Naive thymus-derived CD4-positive, alpha-beta T cell (primary cell): ENCODE measurements at regions of chr7 and their contacts with region 1.

Region 1: DNA sequence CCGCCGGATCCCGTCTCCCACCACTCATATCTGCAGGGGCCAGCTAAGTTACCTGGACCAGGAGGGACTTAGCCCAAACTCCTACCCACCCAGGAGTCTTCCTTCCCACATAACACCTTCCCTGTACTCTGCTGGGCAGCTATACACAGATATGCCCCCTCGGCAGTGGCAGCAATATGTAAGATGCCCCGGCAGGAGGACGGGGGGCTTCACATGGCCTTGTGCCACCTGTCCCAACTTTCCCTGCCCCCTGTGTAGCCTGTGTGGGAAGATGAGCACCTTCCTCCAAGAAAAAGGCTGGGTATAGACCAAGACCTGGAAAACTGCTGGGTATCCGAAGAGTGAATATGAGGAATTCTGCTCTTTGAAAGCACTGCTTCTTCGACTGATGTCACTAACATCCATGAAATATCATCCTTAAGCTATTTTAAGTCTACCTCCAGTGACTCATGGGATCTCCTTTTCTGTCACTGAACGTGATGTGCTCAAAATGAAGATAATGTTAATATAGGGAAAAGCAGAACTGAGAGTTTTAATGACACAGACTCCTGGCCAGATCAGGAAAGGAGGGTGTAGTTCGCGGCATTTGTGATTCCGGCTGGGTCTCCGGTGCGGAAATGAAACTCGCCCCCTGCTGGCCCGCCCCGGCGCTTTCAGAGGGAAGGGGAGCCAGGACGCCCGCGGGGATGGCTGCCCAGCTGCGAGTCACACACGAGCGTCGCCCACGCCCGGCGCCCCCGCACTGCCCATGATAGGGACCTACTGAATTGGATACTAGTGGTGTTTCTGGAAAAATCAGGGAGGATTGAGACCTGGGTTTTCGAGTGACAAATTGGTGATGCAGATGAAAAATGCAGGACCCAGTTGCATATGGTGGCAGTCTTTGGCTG is 256.9 kb upstream of the NFE2L3 start:
- DNase-seq: peak; percentile 37 to 66 (median 52)
- ATAC-seq: peak; percentile 84
- H3K4me3 ChIP-seq: peak overlapping the region; percentile 46
- H3K4me3 Mint-ChIP-seq: peak overlapping the region; percentile 48 to 93 (median 77)
- H3K27ac ChIP-seq: no peak overlapping the region
- H3K27ac Mint-ChIP-seq: peak overlapping the region in 4 of 9 donors; percentile 9 to 71 (median 38)
- H3K4me1 ChIP-seq: peaks cover 9 to 13% of the 10 kb centered on the region in 2 donors
- H3K4me1 Mint-ChIP-seq: peaks cover 13 to 29% (median 27%) of the 10 kb centered on the region in 7 donors
- H3K27me3 ChIP-seq: no peaks in the 10 kb centered on the region
- H3K27me3 Mint-ChIP-seq: peaks cover 7 to 37% (median 15%) of the 10 kb centered on the region in 5 donors

Region 2: GRCh38 chr7:25862260-25863037 is 32.7 kb before region 1 on chr7:
- CTCF ChIA-PET with region 1: interaction called, 4 read pairs
- POLR2A ChIA-PET with region 1: no interaction called
- intact Hi-C with region 1: loop called in 1 of 2 experiments (anchors 2 kb)
- DNase-seq: peak; percentile 32 to 95 (median 49)
- ATAC-seq: peak; percentile 93
- H3K4me3 ChIP-seq: peak overlapping the region; percentile 4
- H3K4me3 Mint-ChIP-seq: peak overlapping the region in 8 of 10 donors; percentile 38 to 87 (median 61)
- H3K27ac ChIP-seq: no peak overlapping the region
- H3K27ac Mint-ChIP-seq: peak overlapping the region in 8 of 9 donors; percentile 14 to 88 (median 84)
- H3K4me1 ChIP-seq: peaks cover 0 to 6% of the 10 kb centered on the region in 2 donors
- H3K4me1 Mint-ChIP-seq: peaks cover 8 to 46% (median 20%) of the 10 kb centered on the region in 7 donors
- H3K27me3 ChIP-seq: peaks cover 35 to 87% of the 10 kb centered on the region in 2 donors
- H3K27me3 Mint-ChIP-seq: peaks cover 23 to 82% (median 62%) of the 10 kb centered on the region in 5 donors

Region 3: DNA sequence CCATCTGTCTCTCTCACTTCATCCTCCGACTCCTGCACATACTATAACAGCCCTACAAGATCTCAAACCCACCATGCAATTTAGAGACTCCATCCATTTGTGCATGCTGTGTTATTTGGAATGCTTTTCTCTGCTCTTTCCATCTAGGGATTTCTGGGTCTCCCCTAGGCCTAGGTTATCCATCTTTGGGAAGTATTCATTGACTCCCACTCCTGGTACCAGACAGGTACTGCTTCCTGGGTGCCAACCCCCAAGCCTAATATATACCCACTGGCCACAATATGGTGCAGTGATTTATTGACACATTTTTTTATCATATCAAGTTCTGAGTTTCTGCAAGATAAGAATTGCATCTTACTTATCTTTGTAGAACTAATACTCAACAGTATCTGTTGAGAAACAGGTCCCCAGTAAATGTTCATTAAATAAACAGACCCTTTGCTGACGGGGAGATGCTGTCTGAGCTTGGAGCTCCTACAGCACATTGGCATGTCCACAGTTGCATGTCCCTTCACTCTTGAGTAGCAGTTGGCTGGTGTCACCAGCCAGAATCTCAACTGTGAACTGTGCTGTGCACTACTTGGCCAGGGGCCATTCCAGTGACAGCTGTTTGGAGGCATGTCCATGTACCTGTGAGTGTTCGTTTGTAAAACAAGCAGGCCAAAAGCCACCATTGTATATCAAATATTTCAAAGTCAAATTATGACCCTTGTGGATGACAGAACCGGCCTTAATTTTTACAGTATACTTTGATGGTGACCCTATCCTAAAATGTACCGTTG is 33.6 kb after region 1 on chr7:
- CTCF ChIA-PET with region 1: no interaction called
- POLR2A ChIA-PET with region 1: no interaction called
- intact Hi-C with region 1: no loop called
- DNase-seq: no peak
- ATAC-seq: no peak
- H3K4me3 ChIP-seq: no peak overlapping the region
- H3K4me3 Mint-ChIP-seq: no peak overlapping the region
- H3K27ac ChIP-seq: no peak overlapping the region
- H3K27ac Mint-ChIP-seq: no peak overlapping the region
- H3K4me1 ChIP-seq: no peaks in the 10 kb centered on the region
- H3K4me1 Mint-ChIP-seq: no peaks in the 10 kb centered on the region
- H3K27me3 ChIP-seq: peaks cover 0 to 3% of the 10 kb centered on the region in 2 donors
- H3K27me3 Mint-ChIP-seq: peaks cover 22 to 46% (median 37%) of the 10 kb centered on the region in 5 donors

Region 4: GRCh38 chr7:26061688-26062150 is 166.6 kb after region 1 on chr7:
- CTCF ChIA-PET with region 1: interaction called, 31 read pairs
- POLR2A ChIA-PET with region 1: interaction called, 3 read pairs
- intact Hi-C with region 1: loop called (anchors 1 kb)
- DNase-seq: peak; percentile 37 to 71 (median 59)
- ATAC-seq: peak; percentile 88
- H3K4me3 ChIP-seq: no peak overlapping the region
- H3K4me3 Mint-ChIP-seq: no peak overlapping the region
- H3K27ac ChIP-seq: no peak overlapping the region
- H3K27ac Mint-ChIP-seq: no peak overlapping the region
- H3K4me1 ChIP-seq: no peaks in the 10 kb centered on the region
- H3K4me1 Mint-ChIP-seq: peaks cover 0 to 13% (median 0%) of the 10 kb centered on the region in 7 donors
- H3K27me3 ChIP-seq: no peaks in the 10 kb centered on the region
- H3K27me3 Mint-ChIP-seq: peaks cover 5 to 33% (median 15%) of the 10 kb centered on the region in 5 donors

Region 5: DNA sequence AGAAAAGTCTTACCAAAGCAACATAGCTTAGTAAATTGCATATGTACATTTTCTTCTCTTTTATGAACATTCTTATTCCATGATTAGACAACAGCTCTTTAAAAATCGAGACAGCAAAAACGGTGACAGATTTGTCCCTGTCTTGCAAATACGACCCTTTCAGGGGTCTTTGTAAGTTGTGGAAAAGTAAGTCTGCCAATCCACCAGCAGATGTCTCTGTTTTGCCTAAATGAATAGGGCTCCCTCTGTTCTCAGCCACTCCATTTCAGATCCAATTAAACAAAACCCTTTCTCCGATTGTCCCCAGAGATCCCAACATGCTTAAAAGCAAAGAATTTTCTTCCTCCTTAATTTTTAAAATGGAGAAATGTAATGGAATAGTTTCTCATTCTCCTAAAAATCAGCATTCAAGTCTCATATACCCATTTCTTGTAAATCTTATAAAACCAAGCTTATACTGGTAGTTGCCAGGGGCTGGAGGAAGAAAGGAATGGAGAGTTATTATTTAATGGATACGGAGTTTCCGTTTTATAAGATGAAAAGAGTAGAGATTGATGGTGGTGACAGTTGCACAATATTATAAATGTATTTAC is 195.9 kb after region 1 on chr7:
- CTCF ChIA-PET with region 1: interaction called, 36 read pairs
- POLR2A ChIA-PET with region 1: no interaction called
- intact Hi-C with region 1: no loop called
- DNase-seq: peak in 7 of 9 donors; percentile 19 to 63 (median 53)
- ATAC-seq: peak; percentile 64
- H3K4me3 ChIP-seq: no peak overlapping the region
- H3K4me3 Mint-ChIP-seq: peak overlapping the region in 9 of 10 donors; percentile 4 to 50 (median 30)
- H3K27ac ChIP-seq: no peak overlapping the region
- H3K27ac Mint-ChIP-seq: peak overlapping the region in 6 of 9 donors; percentile 1 to 68 (median 2)
- H3K4me1 ChIP-seq: peaks cover 0 to 20% of the 10 kb centered on the region in 2 donors
- H3K4me1 Mint-ChIP-seq: peaks cover 11 to 54% (median 22%) of the 10 kb centered on the region in 7 donors
- H3K27me3 ChIP-seq: no peaks in the 10 kb centered on the region
- H3K27me3 Mint-ChIP-seq: no peaks in the 10 kb centered on the region

Region 6: GRCh38 chr7:26284995-26285632 is 390.0 kb after region 1 on chr7:
- CTCF ChIA-PET with region 1: interaction called, 4 read pairs
- POLR2A ChIA-PET with region 1: no interaction called
- intact Hi-C with region 1: loop called (anchors 1 to 2 kb)
- DNase-seq: peak in 6 of 9 donors; percentile 20 to 49 (median 30)
- ATAC-seq: peak; percentile 82
- H3K4me3 ChIP-seq: no peak overlapping the region
- H3K4me3 Mint-ChIP-seq: no peak overlapping the region
- H3K27ac ChIP-seq: no peak overlapping the region
- H3K27ac Mint-ChIP-seq: no peak overlapping the region
- H3K4me1 ChIP-seq: no peaks in the 10 kb centered on the region
- H3K4me1 Mint-ChIP-seq: peaks cover 0 to 6% (median 4%) of the 10 kb centered on the region in 7 donors
- H3K27me3 ChIP-seq: no peaks in the 10 kb centered on the region
- H3K27me3 Mint-ChIP-seq: peaks cover 0 to 19% (median 0%) of the 10 kb centered on the region in 5 donors

Region 7: DNA sequence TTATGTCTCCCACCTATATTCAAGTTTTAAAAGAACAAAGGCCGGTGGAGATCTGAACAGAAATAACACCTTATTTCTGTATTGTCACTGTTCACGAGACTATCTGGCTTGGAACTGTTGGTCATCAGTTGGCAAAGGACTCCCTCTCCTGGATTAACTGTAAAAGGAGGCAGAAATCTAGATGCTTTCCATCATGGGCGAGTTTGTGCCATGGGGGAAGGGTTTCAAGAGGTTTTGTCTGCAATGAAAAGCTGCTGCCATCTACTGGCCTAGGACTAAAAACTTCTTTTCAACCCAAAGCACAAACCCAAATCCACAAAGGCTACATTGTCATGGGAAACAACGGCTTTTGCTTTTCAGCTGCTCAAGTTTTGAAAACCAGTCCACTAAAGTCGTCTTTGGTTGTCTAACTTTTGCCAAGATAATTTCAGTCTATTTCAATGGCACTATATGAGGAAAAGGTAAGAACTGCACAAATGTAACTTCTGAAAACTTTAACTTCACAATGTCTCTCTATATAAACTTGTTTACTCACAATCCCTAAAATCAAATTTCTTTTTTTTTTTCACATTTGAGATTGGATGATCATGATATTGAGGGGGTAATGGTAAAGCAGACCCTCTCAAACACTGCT is 772.5 kb after region 1 on chr7:
- CTCF ChIA-PET with region 1: interaction called, 9 read pairs
- POLR2A ChIA-PET with region 1: no interaction called
- intact Hi-C with region 1: loop called (anchors 1 kb)
- DNase-seq: peak in 8 of 9 donors; percentile 39 to 78 (median 64)
- ATAC-seq: peak; percentile 77
- H3K4me3 ChIP-seq: no peak overlapping the region
- H3K4me3 Mint-ChIP-seq: no peak overlapping the region
- H3K27ac ChIP-seq: no peak overlapping the region
- H3K27ac Mint-ChIP-seq: no peak overlapping the region
- H3K4me1 ChIP-seq: peaks cover 0 to 4% of the 10 kb centered on the region in 2 donors
- H3K4me1 Mint-ChIP-seq: peaks cover 0 to 23% (median 17%) of the 10 kb centered on the region in 7 donors
- H3K27me3 ChIP-seq: no peaks in the 10 kb centered on the region
- H3K27me3 Mint-ChIP-seq: peaks cover 9 to 61% (median 14%) of the 10 kb centered on the region in 5 donors

Region 8: DNA sequence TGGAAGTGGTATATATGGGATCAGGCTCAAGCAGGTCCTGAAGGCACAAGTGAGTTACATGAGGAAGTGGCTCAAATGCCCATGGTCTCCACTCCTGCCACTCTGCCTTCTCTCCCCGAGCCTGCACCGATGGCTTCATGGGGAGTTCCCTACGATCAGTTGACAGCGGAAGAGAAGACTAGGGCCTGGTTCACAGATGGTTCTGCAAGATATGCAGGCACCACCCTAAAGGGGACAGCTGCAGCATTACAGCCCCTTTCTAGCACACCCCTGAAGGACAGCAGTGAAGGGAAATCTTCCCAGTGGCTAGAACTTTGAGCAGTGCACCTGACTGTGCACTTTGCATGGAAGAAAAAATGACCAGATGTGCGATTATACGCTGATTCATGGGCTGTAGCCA is 1105.3 kb after region 1 on chr7:
- CTCF ChIA-PET with region 1: no interaction called
- POLR2A ChIA-PET with region 1: no interaction called
- intact Hi-C with region 1: no loop called
- DNase-seq: no peak
- ATAC-seq: no peak
- H3K4me3 ChIP-seq: no peak overlapping the region
- H3K4me3 Mint-ChIP-seq: no peak overlapping the region
- H3K27ac ChIP-seq: no peak overlapping the region
- H3K27ac Mint-ChIP-seq: no peak overlapping the region
- H3K4me1 ChIP-seq: no peaks in the 10 kb centered on the region
- H3K4me1 Mint-ChIP-seq: no peaks in the 10 kb centered on the region
- H3K27me3 ChIP-seq: no peaks in the 10 kb centered on the region
- H3K27me3 Mint-ChIP-seq: peaks cover 0 to 11% (median 4%) of the 10 kb centered on the region in 5 donors

Region 9: GRCh38 chr7:27784393-27785053 is 1889.4 kb after region 1 on chr7:
- CTCF ChIA-PET with region 1: no interaction called
- POLR2A ChIA-PET with region 1: no interaction called
- intact Hi-C with region 1: loop called in 1 of 2 experiments (anchors 10 kb)
- DNase-seq: peak in 7 of 9 donors; percentile 30 to 54 (median 43)
- ATAC-seq: peak; percentile 73
- H3K4me3 ChIP-seq: no peak overlapping the region
- H3K4me3 Mint-ChIP-seq: no peak overlapping the region
- H3K27ac ChIP-seq: no peak overlapping the region
- H3K27ac Mint-ChIP-seq: peak overlapping the region in 1 of 9 donors; percentile 15
- H3K4me1 ChIP-seq: no peaks in the 10 kb centered on the region
- H3K4me1 Mint-ChIP-seq: peaks cover 4 to 35% (median 20%) of the 10 kb centered on the region in 7 donors
- H3K27me3 ChIP-seq: no peaks in the 10 kb centered on the region
- H3K27me3 Mint-ChIP-seq: no peaks in the 10 kb centered on the region